HepG2 (cell line): ENCODE measurements at regions of chr16 and their contacts with region 1.

Region 1: GRCh38 chr16:1782352-1783091 is at the starts of genes NUBP2 and SPSB3:
- DNase-seq: peak; percentile 99
- ATAC-seq: peak; percentile 90
- H3K4me3 ChIP-seq: peak within 1 kb of the TSS; percentile 94 to 96 (median 94)
- H3K27ac ChIP-seq: peak within 1 kb of the TSS; percentile 70
- H3K4me1 ChIP-seq: peaks cover 22% of the 10 kb centered on the region
- H3K27me3 ChIP-seq: peaks cover 0 to 2% of the 10 kb centered on the region in 2 experiments; a peak in 1 of 5 replicates
- CTCF ChIP-seq: no peak
- EP300 ChIP-seq: no peak
- POLR2A ChIP-seq: peak; percentile 41 to 74; a peak in 3 of 4 replicates
- RAD21 ChIP-seq: no peak; the same call in 1 of the 2 replicates
- total RNA-seq, gene NUBP2: 43.8 and 61.5 TPM in 2 replicates
- total RNA-seq, gene SPSB3: 8.2 and 13.2 TPM in 2 replicates

Region 2: DNA sequence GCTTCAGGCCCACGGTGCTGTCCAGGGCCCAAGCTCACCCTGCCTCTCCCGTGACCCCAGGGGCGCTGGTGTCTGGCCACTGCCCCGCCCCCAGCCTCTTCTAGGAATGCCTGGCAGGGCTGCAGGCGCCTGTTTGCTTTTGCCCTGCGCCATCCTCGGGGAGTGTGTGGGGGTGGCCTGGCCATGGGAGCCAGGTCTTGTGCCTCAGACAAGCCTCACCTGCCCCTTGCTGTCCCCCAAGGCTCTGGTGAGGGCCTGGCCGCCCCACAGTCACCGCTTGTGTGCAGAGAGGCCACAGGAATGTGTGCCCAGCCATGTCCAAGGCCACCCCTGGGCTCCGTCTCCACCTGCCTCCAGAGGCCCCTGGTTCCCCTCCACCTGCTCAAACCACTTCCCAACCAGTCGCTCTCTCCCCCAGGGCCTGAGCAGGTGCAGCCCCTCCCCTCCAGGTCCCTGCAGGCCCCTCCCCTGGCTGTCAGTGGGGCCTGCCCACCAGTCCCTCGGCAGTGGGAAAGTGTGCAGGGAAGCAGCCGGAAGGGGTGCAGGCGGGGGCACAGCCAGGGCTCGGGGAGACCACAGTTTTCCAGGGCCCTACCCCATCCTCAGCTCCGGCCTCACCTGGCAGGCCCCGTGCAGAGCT is 11.8 kb after region 1 on chr16:
- CTCF ChIA-PET with region 1: no interaction called
- POLR2A ChIA-PET with region 1: interaction called, 57 read pairs
- in situ Hi-C with region 1: no loop called
- intact Hi-C with region 1: no loop called
- DNase-seq: peak; percentile 85
- ATAC-seq: peak; percentile 91
- H3K4me3 ChIP-seq: peak overlapping the region; percentile 53 to 75 (median 59)
- H3K27ac ChIP-seq: peak overlapping the region; percentile 65
- H3K4me1 ChIP-seq: peaks cover 25% of the 10 kb centered on the region
- H3K27me3 ChIP-seq: no peaks in the 10 kb centered on the region
- CTCF ChIP-seq: 0 out of 2 replicates have a peak, but pooled peaks have one; percentile 26
- EP300 ChIP-seq: peak in 1 of 2 experiments; percentile 49; a peak in 1 of 4 replicates
- POLR2A ChIP-seq: peak in 1 of 2 experiments; percentile 61; a peak in 1 of 4 replicates
- RAD21 ChIP-seq: peak; percentile 42; the same call in 1 of the 2 replicates

Region 3: GRCh38 chr16:1899641-1900451 is 117.3 kb after region 1 on chr16:
- CTCF ChIA-PET with region 1: no interaction called
- POLR2A ChIA-PET with region 1: no interaction called
- in situ Hi-C with region 1: no loop called
- intact Hi-C with region 1: no loop called
- DNase-seq: no peak
- ATAC-seq: peak; percentile 49
- H3K4me3 ChIP-seq: 0 out of 6 replicates have a peak overlapping the region, but pooled peaks of 1 of the 3 experiments have one; percentile 31
- H3K27ac ChIP-seq: no peak overlapping the region
- H3K4me1 ChIP-seq: peaks cover 12% of the 10 kb centered on the region
- H3K27me3 ChIP-seq: peaks cover 7 to 53% of the 10 kb centered on the region in 2 experiments; a peak in 4 of 5 replicates
- CTCF ChIP-seq: no peak
- EP300 ChIP-seq: no peak
- POLR2A ChIP-seq: no peak
- RAD21 ChIP-seq: no peak